Sigmoid colon (tissue), 7 donors: ENCODE measurements at regions of chr10 and their contacts with region 1.

Region 1: DNA sequence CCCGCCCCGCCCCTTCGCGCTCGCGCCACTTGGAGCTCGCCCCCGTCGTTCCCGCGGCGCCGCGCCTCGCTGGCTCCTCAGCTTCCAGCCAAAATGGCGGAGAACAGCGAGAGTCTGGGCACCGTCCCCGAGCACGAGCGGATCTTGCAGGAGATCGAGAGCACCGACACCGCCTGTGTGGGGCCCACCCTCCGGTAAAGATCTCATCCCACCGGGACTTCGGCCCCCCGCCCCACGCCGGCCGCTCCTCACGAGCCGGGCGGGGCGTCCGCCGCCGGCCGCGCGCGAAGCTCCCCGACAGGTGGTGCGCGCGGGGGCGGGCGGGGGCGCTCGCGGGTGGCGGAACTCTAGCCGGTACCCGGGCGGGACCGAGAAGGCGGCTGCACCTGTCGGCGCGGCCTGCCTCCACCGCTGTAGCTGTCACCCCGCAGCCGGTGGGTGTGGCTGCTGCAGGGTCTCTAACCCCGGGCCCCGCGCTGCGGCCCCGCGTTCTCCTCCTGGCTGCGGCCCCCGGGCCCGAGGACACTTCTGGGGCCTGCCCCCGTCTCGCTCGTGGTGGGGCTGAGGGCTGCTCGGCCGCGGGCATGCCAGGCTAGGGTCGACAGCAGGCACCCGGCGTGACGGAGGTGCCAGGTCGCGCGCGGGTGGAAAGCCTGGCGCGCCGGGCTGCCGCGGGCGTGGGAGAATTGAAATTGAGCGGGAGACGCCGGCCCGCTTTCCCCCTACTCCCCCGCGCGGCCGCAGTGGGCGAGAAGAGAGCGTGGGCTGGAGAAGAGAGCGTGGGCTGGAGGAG is at the start of gene EXOC6:
- DNase-seq: peak; percentile 88
- H3K4me3 ChIP-seq: peak within 1 kb of the TSS; percentile 89 to 99 (median 94)
- H3K27ac ChIP-seq: peak within 1 kb of the TSS; percentile 86 to 90 (median 88)
- H3K4me1 ChIP-seq: peaks cover 0 to 21% (median 12%) of the 10 kb centered on the region in 4 donors
- H3K27me3 ChIP-seq: no peaks in the 10 kb centered on the region
- CTCF ChIP-seq: peak in 1 of 4 experiments; percentile 19
- EP300 ChIP-seq: no peak
- POLR2A ChIP-seq: no peak
- total RNA-seq, gene EXOC6: 16.6 to 20.2 (median 18.9) TPM

Region 2: GRCh38 chr10:92699518-92700381 is 148.9 kb before region 1 on chr10:
- intact Hi-C with region 1: loop called (anchors 2 kb)
- DNase-seq: no peak
- H3K4me3 ChIP-seq: peak overlapping the region; percentile 18 to 53 (median 44)
- H3K27ac ChIP-seq: peak overlapping the region; percentile 52 to 83 (median 68)
- H3K4me1 ChIP-seq: peaks cover 0 to 18% (median 6%) of the 10 kb centered on the region in 4 donors
- H3K27me3 ChIP-seq: peaks cover 0 to 14% (median 0%) of the 10 kb centered on the region in 3 donors
- CTCF ChIP-seq: no peak
- EP300 ChIP-seq: no peak
- POLR2A ChIP-seq: no peak

Region 3: DNA sequence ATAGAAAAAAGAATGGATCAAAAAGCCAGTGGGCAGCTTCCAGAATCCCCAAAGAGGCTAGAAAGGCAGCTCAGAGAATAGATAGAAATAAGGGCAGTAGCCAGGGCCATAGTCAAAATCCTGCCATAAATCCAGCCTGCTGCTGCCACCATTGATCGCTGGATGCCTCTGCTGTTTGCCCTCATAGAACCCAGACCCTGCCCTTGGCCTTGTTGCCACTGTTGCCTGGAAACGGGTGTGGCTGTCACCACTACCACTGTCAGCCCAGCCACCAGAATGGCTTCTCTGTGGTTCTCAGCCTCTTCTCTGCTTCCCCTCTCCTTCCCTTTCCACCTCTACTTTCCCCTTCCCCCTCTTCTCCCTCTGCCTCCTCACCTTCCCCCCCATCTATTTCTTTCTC is 101.0 kb before region 1 on chr10:
- intact Hi-C with region 1: no loop called
- DNase-seq: no peak
- H3K4me3 ChIP-seq: no peak overlapping the region
- H3K27ac ChIP-seq: no peak overlapping the region
- H3K4me1 ChIP-seq: peaks cover 0 to 7% (median 3%) of the 10 kb centered on the region in 4 donors
- H3K27me3 ChIP-seq: no peaks in the 10 kb centered on the region
- CTCF ChIP-seq: no peak
- EP300 ChIP-seq: no peak
- POLR2A ChIP-seq: no peak

Region 4: DNA sequence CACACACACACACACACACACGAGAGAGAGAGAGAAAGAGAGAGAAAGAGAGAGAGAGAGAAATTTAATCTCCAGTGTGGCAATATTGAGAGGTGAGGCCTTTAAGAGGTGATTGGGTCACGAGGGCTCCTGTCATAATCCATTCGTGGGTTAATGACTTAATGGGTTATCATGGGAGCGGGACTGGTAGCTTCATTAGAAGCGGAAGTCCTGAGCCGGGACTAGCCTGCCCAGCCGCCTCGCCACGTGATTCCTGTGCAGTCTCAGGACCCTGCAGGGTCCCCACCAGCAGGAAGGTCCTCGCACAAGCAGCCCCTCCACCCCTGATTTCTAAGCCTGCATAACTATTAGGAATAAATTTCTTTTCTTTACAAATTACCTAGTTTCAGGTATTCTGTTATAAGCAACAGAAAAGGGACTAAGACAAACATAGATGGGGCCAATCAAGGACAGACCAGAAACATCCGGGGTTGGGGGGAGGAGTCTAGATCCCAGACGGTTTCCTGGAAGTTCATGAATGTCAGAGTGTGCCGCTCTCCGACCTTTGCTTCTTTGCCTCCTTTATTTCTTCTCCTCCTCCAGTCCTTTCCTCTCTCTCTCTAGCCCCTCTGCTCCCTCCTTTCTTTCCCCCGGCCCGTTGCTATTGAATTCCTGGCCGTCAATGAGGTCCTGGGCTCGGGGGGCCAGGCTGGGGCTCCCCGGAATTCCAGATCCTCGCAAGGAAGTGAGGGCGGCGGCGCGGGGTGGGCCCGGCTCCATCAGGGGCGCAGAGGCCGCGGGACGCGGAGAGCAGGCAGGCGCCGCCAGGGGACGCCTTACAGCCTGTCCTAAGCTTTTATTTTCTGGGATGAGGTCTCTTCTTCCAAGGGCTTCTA is 371.9 kb after region 1 on chr10:
- intact Hi-C with region 1: no loop called
- DNase-seq: no peak
- H3K4me3 ChIP-seq: no peak overlapping the region
- H3K27ac ChIP-seq: no peak overlapping the region
- H3K4me1 ChIP-seq: no peaks in the 10 kb centered on the region
- H3K27me3 ChIP-seq: no peaks in the 10 kb centered on the region
- CTCF ChIP-seq: no peak
- EP300 ChIP-seq: no peak
- POLR2A ChIP-seq: no peak